Endothelial cell of umbilical vein (primary cell): ENCODE measurements at regions of chr2 and their contacts with region 1.

Region 1: DNA sequence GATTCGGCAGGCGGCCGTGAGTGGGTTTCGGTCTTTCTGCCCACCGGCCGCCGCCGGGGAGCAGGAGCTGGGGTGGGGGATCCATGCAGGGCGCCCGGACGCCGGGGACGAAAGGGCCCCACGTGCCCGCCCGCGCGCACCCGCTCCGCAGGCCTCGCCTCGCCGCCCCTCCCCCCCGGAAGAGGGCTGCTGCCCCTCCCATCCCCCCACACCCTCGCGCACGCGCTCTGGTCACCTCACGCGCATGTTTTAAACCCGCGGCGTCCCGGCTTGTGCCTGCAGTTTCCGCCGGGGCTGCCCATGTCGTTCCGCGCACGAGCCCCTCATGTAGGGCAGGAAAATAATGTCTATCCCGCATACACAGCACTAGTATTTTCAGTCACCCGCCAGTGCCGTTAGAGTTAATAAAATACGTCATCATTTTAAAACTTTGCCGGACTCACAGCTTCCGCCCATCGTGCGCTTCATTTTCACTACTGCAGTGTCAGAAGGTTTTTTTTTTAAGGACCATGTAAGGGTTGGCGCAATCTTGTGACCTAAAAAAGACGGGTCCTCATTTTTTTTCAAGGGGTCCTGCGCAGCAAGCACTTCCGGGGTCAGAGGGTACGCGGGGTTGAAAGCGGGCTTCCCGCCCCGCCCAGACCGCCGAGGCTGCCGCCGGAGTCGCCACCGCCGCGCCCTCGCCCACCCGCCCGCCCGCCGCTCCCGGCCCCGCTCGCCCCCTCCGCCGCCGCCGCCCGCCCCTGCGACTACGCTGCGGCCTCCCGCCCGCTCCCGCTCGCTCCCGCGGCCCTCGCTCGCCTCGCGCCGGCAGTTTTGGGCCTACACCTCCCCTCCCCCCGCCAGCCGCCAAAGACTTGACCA is at the start of gene PCBP1:
- DNase-seq: peak; percentile 88
- H3K4me3 ChIP-seq: peak within 1 kb of the TSS; percentile 90 to 93 (median 91)
- H3K27ac ChIP-seq: peak within 1 kb of the TSS; percentile 100
- H3K4me1 ChIP-seq: peaks cover 29% of the 10 kb centered on the region
- H3K27me3 ChIP-seq: no peaks in the 10 kb centered on the region
- CTCF ChIP-seq: no peak
- POLR2A ChIP-seq: peak; percentile 96
- total RNA-seq, gene PCBP1: 342 and 360 TPM in 2 replicates

Region 2: DNA sequence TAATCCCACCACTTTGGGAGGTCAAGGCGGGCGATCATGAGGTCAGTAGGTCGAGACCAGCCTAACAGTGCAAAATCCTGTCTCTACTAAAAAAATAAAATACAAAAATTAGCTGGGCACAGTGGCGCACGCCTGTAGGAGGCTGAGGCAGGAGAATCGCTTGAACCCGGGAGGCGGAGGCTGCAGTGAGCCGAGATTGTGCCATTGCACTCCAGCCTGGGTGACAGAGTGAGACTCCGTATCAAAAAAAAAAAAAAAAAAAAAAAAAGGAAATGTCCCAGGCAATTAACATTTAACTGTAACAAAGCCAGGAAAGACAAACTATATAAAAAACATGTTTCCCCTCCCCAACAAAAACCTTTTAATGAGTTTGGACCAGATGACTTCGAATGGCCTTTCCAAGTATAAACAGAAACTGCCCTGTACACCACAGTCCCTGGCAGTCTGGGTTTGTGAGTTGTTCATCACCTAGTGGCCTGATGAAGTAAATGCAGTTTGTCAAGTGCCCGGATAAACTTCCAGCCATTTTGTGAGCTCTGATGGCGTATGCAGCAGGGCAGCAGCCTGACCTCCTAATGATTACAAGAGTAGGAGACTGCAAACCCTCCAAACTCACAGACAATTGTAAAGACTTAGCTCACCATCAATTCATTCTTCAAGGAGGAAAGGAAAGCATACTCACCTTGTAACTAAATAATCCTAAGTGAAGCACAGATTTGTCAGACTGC is 16.4 kb before region 1 on chr2:
- CTCF ChIA-PET with region 1: interaction called, 25 read pairs
- POLR2A ChIA-PET with region 1: interaction called, 4 read pairs
- dilution Hi-C with region 1: no loop called
- intact Hi-C with region 1: no loop called
- DNase-seq: peak; percentile 88
- H3K4me3 ChIP-seq: no peak overlapping the region
- H3K27ac ChIP-seq: no peak overlapping the region
- H3K4me1 ChIP-seq: peaks cover 3% of the 10 kb centered on the region
- H3K27me3 ChIP-seq: no peaks in the 10 kb centered on the region
- CTCF ChIP-seq: peak; percentile 75 to 81
- POLR2A ChIP-seq: no peak

Region 3: GRCh38 chr2:70124983-70125480 is 38.0 kb after region 1 on chr2:
- CTCF ChIA-PET with region 1: interaction called, 3 read pairs
- POLR2A ChIA-PET with region 1: interaction called, 7 read pairs
- dilution Hi-C with region 1: no loop called
- intact Hi-C with region 1: loop called (anchors 1 kb)
- DNase-seq: peak; percentile 59
- H3K4me3 ChIP-seq: peak overlapping the region; percentile 28 to 62 (median 55)
- H3K27ac ChIP-seq: peak overlapping the region; percentile 79
- H3K4me1 ChIP-seq: peaks cover 9% of the 10 kb centered on the region
- H3K27me3 ChIP-seq: no peaks in the 10 kb centered on the region
- CTCF ChIP-seq: no peak
- POLR2A ChIP-seq: peak; percentile 77

Region 4: GRCh38 chr2:70132244-70133126 is 45.4 kb after region 1 on chr2:
- CTCF ChIA-PET with region 1: interaction called, 5 read pairs
- POLR2A ChIA-PET with region 1: interaction called, 4 read pairs
- dilution Hi-C with region 1: no loop called
- intact Hi-C with region 1: loop called (anchors 2 kb)
- DNase-seq: peak; percentile 87
- H3K4me3 ChIP-seq: peak overlapping the region in 1 of 3 experiments; percentile 38
- H3K27ac ChIP-seq: peak overlapping the region; percentile 69
- H3K4me1 ChIP-seq: peaks cover 40% of the 10 kb centered on the region
- H3K27me3 ChIP-seq: no peaks in the 10 kb centered on the region
- CTCF ChIP-seq: no peak
- POLR2A ChIP-seq: peak; percentile 23

Region 5: DNA sequence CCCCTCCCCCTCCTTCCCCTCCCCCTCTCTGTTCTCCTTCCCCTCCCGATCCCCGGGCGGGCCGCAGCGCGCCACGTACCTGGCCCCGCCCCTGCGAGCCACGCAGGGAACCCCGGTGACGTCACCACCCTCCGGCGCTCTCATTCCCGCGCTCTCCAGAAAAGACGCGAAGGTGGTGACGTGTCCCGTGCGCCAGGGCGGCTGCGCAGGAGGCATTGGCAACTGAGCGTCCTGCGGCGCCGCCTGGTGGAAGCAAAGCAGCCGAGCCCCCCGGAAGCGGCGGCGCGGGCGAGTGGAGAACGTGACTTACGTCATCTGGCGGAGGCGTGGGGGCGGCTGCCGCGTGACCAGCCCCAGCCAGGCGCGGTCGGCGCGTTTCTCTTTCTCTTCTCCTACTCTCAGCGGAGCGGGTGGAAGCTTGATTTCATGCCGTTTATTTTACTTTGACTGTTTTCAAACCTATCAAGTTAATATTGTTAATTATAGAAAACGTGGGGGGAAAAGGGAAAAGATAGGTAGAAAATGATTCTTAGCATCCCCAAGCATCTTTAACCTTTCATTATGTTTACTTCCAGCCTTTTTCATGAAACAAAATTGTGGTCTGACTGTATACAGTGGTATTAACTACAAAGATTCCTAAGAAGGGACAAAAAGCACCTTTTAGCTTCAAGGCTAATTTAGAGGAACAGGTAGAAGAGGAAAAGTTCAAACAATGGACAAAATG is 55.7 kb after region 1 on chr2:
- CTCF ChIA-PET with region 1: interaction called, 8 read pairs
- POLR2A ChIA-PET with region 1: interaction called, 8 read pairs
- dilution Hi-C with region 1: no loop called
- intact Hi-C with region 1: loop called (anchors 1 kb)
- DNase-seq: peak; percentile 100
- H3K4me3 ChIP-seq: peak overlapping the region; percentile 40 to 81 (median 47)
- H3K27ac ChIP-seq: peak overlapping the region; percentile 95
- H3K4me1 ChIP-seq: peaks cover 14% of the 10 kb centered on the region
- H3K27me3 ChIP-seq: no peaks in the 10 kb centered on the region
- CTCF ChIP-seq: peak; percentile 97 to 98
- POLR2A ChIP-seq: no peak

Region 6: GRCh38 chr2:70190418-70191243 is 103.6 kb after region 1 on chr2 and contains the start of gene C2orf42:
- CTCF ChIA-PET with region 1: no interaction called
- POLR2A ChIA-PET with region 1: no interaction called
- dilution Hi-C with region 1: no loop called
- intact Hi-C with region 1: loop called (anchors 2 kb)
- DNase-seq: peak; percentile 98
- H3K4me3 ChIP-seq: peak within 1 kb of the TSS; percentile 52 to 73 (median 60)
- H3K27ac ChIP-seq: peak within 1 kb of the TSS; percentile 67
- H3K4me1 ChIP-seq: no peaks in the 10 kb centered on the region
- H3K27me3 ChIP-seq: no peaks in the 10 kb centered on the region
- CTCF ChIP-seq: peak in 1 of 2 donors; percentile 23
- POLR2A ChIP-seq: peak; percentile 98
- total RNA-seq, gene C2orf42: 12.0 and 13.1 TPM in 2 replicates

Region 7: GRCh38 chr2:70248181-70248847 is 161.2 kb after region 1 on chr2 and contains the start of gene TIA1:
- CTCF ChIA-PET with region 1: no interaction called
- POLR2A ChIA-PET with region 1: no interaction called
- dilution Hi-C with region 1: no loop called
- intact Hi-C with region 1: loop called (anchors 5 kb)
- DNase-seq: peak; percentile 99
- H3K4me3 ChIP-seq: peak within 1 kb of the TSS; percentile 75 to 100 (median 97)
- H3K27ac ChIP-seq: peak within 1 kb of the TSS; percentile 82
- H3K4me1 ChIP-seq: peaks cover 23% of the 10 kb centered on the region
- H3K27me3 ChIP-seq: no peaks in the 10 kb centered on the region
- CTCF ChIP-seq: no peak
- POLR2A ChIP-seq: peak; percentile 96
- total RNA-seq, gene TIA1: 140 and 163 TPM in 2 replicates

Region 8: DNA sequence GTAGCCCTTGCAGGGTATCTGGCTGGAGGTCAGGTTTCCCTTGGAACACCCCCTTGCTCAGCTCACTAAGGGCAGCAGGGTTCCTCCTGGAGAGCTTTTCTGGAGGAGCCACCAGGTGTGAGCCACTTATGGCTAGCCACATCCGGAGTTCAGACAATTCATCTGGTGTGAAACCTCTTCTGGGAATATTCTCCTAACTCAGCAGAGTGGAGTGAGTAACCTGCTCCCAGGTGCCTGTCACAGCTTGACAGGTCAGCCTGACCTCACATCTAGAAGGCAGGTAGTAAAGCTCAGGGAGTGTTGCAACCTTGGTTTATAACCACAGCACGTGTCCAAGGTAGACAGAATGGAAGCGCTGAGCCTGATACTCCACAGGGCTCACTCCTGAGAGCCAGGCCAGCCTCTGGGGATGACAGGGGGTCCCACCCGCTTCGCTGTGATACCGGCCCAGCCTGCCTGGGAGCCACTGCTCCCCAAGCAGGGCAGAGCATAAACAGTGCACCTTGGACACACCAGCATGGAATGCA is 529.2 kb after region 1 on chr2:
- CTCF ChIA-PET with region 1: no interaction called
- POLR2A ChIA-PET with region 1: no interaction called
- dilution Hi-C with region 1: no loop called
- intact Hi-C with region 1: no loop called
- DNase-seq: no peak
- H3K4me3 ChIP-seq: no peak overlapping the region
- H3K27ac ChIP-seq: no peak overlapping the region
- H3K4me1 ChIP-seq: no peaks in the 10 kb centered on the region
- H3K27me3 ChIP-seq: peaks cover 8 to 11% of the 10 kb centered on the region in 2 experiments
- CTCF ChIP-seq: no peak
- POLR2A ChIP-seq: no peak